CD8-positive, alpha-beta memory T cell (primary cell): ENCODE measurements at regions of chr15 and their contacts with region 1.

Region 1: GRCh38 chr15:75453703-75454470 is 2.4 kb upstream of the SIN3A start:
- DNase-seq: peak; percentile 94 to 99 (median 98)
- H3K4me3 ChIP-seq: peak overlapping the region; percentile 90
- H3K4me3 Mint-ChIP-seq: peak overlapping the region; percentile 93 to 98 (median 96)
- H3K27ac ChIP-seq: peak overlapping the region; percentile 94
- H3K27ac Mint-ChIP-seq: peak overlapping the region; percentile 95 to 99 (median 98)
- H3K4me1 ChIP-seq: peaks cover 35% of the 10 kb centered on the region
- H3K4me1 Mint-ChIP-seq: peaks cover 37 to 43% (median 41%) of the 10 kb centered on the region in 3 donors
- H3K27me3 ChIP-seq: no peaks in the 10 kb centered on the region
- H3K27me3 Mint-ChIP-seq: peaks cover 0 to 1% of the 10 kb centered on the region in 2 donors

Region 2: DNA sequence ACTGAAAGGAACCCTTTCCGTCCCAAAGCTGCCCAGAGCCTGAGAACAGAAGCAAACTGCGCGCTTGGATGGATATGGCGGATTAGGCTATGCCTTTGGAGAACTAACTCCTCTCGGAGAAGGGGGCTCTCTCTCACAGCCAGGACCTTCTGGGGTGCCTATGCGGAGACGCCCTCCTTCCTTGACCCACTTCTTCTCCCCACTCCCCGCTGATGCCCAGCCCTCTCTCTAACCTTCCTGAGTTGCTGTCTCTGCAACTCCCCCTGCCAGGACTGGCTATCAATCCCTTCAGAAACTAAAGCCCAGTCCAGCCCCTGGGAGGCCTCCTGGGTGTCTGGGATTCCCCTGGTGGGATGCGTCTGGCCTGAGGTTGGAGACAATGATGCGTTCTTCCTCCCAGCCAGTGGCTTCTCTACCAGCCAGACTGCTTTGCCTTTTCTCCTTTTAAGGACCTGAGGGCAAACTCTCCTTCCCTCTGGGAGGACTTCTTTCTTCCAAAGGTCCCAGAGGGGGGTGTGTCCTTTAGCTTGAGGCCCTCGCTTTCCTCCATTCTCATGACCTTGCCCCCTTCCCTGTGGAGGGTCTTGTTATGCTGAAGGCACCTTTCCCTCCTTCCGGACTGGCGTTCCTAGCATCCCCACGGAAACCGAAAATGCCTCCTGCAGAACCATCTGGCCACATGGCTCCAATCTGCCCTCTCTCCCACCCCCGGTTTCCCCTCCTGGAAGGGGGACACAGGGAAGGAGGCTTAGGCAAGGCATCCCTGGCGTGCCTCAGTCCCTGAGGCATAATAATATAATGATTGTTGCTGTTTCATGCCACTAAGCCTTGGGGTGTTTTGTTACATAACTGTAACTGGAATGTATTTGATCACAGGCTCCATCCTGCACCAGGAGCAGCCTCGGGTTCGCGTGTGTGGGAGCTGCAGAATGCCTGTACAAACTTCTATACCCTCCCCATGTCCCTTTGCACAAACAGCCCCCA is 315.6 kb before region 1 on chr15:
- CTCF ChIA-PET with region 1: no interaction called
- POLR2A ChIA-PET with region 1: no interaction called
- DNase-seq: no peak
- H3K4me3 ChIP-seq: no peak overlapping the region
- H3K4me3 Mint-ChIP-seq: no peak overlapping the region
- H3K27ac ChIP-seq: no peak overlapping the region
- H3K27ac Mint-ChIP-seq: peak overlapping the region in 1 of 8 donors; percentile 19
- H3K4me1 ChIP-seq: no peaks in the 10 kb centered on the region
- H3K4me1 Mint-ChIP-seq: no peaks in the 10 kb centered on the region
- H3K27me3 ChIP-seq: no peaks in the 10 kb centered on the region
- H3K27me3 Mint-ChIP-seq: peaks cover 3 to 6% of the 10 kb centered on the region in 2 donors

Region 3: DNA sequence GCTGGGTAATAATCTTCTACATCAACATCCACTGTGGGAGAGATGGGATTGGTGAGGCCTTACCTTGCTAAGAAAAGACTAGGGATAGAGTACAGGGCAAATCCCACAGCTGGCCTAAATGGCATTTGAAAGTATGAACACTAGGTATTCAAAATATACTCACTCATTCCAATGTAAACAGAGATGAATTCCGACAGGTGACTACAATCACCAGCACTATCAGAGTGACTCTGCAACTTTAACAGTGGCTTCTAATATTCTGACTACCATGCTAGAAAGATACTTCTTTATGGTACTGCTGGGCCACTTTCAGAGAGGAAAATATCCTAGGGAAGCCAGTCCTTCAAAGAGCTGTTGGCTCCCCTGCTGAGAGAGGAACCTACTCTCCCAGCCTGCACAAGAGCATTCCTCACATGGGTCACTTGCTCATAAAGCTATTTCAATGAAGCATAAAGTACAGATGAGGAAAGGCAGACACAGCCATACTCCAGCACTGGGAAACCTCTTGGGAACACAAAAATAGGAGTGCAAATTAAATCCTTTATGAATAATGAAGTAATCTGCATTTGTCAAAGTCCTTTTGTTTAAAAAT is 64.0 kb before region 1 on chr15:
- CTCF ChIA-PET with region 1: no interaction called
- POLR2A ChIA-PET with region 1: interaction called, 10 read pairs
- DNase-seq: no peak
- H3K4me3 ChIP-seq: no peak overlapping the region
- H3K4me3 Mint-ChIP-seq: no peak overlapping the region
- H3K27ac ChIP-seq: no peak overlapping the region
- H3K27ac Mint-ChIP-seq: peak overlapping the region in 1 of 8 donors; percentile 43
- H3K4me1 ChIP-seq: no peaks in the 10 kb centered on the region
- H3K4me1 Mint-ChIP-seq: peaks cover 5 to 12% (median 11%) of the 10 kb centered on the region in 3 donors
- H3K27me3 ChIP-seq: no peaks in the 10 kb centered on the region
- H3K27me3 Mint-ChIP-seq: no peaks in the 10 kb centered on the region

Region 4: GRCh38 chr15:75483961-75484360 is 30.1 kb after region 1 on chr15:
- CTCF ChIA-PET with region 1: no interaction called
- POLR2A ChIA-PET with region 1: no interaction called
- DNase-seq: no peak
- H3K4me3 ChIP-seq: no peak overlapping the region
- H3K4me3 Mint-ChIP-seq: no peak overlapping the region
- H3K27ac ChIP-seq: no peak overlapping the region
- H3K27ac Mint-ChIP-seq: peak overlapping the region in 5 of 8 donors; percentile 14 to 67 (median 39)
- H3K4me1 ChIP-seq: no peaks in the 10 kb centered on the region
- H3K4me1 Mint-ChIP-seq: peaks cover 6 to 10% (median 7%) of the 10 kb centered on the region in 3 donors
- H3K27me3 ChIP-seq: no peaks in the 10 kb centered on the region
- H3K27me3 Mint-ChIP-seq: no peaks in the 10 kb centered on the region

Region 5: DNA sequence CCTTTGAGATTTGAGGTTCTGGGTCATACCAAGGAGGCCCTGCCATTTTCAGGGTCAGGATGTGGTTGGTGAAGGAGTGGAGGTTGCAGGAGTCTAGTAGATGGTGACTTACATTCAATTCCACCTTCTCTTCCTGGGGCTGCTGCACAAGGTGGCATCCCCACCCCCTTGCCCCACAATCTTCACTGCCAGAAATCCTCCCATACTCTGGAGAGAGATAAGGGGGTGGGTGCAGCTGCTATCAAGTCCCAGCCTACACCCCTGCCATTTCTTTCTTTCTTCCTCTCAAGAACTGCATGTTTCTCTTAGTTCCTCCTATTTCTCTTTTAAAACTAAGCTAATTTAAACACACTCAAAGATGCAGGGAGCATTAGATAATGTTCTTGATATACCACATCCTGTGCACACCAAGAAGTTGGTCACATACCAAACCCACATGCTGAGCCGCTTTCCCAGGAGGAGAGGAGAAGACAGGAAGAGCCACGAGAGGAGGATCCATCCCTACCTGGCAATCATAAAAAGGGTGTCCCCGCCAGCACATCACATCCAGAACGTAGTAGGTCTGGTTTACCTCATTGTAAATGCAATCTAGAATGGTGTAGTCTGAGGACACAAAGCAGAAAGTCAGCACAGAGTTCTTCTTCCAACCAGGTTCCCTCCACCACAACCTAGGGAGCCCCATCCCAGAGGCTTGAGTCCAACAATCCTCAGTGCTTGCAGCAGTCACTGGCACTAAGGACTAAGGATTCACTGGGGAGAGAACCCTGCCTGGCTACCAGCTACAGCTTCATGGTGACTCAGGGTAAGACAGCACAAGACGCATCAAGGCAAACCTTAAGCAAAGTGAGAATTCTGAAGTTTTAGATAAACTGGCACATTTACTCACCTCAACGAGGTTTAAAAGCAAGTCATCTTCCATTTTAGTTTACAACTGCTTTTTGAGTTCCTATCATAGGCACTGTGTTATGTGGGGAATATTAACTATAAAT is 153.1 kb after region 1 on chr15:
- CTCF ChIA-PET with region 1: interaction called, 3 read pairs
- POLR2A ChIA-PET with region 1: interaction called, 10 read pairs
- DNase-seq: peak in 4 of 5 donors; percentile 5 to 51 (median 42)
- H3K4me3 ChIP-seq: peak overlapping the region; percentile 45
- H3K4me3 Mint-ChIP-seq: peak overlapping the region; percentile 33 to 88 (median 77)
- H3K27ac ChIP-seq: peak overlapping the region; percentile 45
- H3K27ac Mint-ChIP-seq: peak overlapping the region; percentile 51 to 95 (median 85)
- H3K4me1 ChIP-seq: peaks cover 43% of the 10 kb centered on the region
- H3K4me1 Mint-ChIP-seq: peaks cover 40 to 57% (median 50%) of the 10 kb centered on the region in 3 donors
- H3K27me3 ChIP-seq: no peaks in the 10 kb centered on the region
- H3K27me3 Mint-ChIP-seq: no peaks in the 10 kb centered on the region

Region 6: GRCh38 chr15:75639709-75640482 is 186.0 kb after region 1 on chr15 and contains the start of gene IMP3:
- CTCF ChIA-PET with region 1: interaction called, 10 read pairs
- POLR2A ChIA-PET with region 1: interaction called, 130 read pairs
- DNase-seq: peak; percentile 87 to 95 (median 92)
- H3K4me3 ChIP-seq: peak within 1 kb of the TSS; percentile 77
- H3K4me3 Mint-ChIP-seq: peak within 1 kb of the TSS; percentile 93 to 97 (median 93)
- H3K27ac ChIP-seq: peak within 1 kb of the TSS; percentile 92
- H3K27ac Mint-ChIP-seq: peak within 1 kb of the TSS; percentile 89 to 97 (median 96)
- H3K4me1 ChIP-seq: peaks cover 33% of the 10 kb centered on the region
- H3K4me1 Mint-ChIP-seq: peaks cover 33 to 46% (median 44%) of the 10 kb centered on the region in 3 donors
- H3K27me3 ChIP-seq: no peaks in the 10 kb centered on the region
- H3K27me3 Mint-ChIP-seq: no peaks in the 10 kb centered on the region
- total RNA-seq, gene IMP3: 123 to 134 TPM